ENCODE measurements at regions of chr14 and their contacts with region 1.

Region 1: GRCh38 chr14:93655078-93655750 is 133.1 kb downstream of the PRIMA1 start:
- DNase-seq: peak; percentile 25
- ATAC-seq: no peak
- H3K4me3 Mint-ChIP-seq: no peak overlapping the region
- H3K27ac Mint-ChIP-seq: no peak overlapping the region
- H3K4me1 Mint-ChIP-seq: no peaks in the 10 kb centered on the region
- H3K27me3 Mint-ChIP-seq: peaks cover 9% of the 10 kb centered on the region

Region 2: GRCh38 chr14:93906341-93907329 is 251.4 kb after region 1 on chr14:
- CTCF ChIA-PET with region 1: interaction called, 13 read pairs
- POLR2A ChIA-PET with region 1: no interaction called
- DNase-seq: peak; percentile 79
- ATAC-seq: peak; percentile 91
- H3K4me3 Mint-ChIP-seq: no peak overlapping the region
- H3K27ac Mint-ChIP-seq: peak overlapping the region; percentile 33
- H3K4me1 Mint-ChIP-seq: peaks cover 5% of the 10 kb centered on the region
- H3K27me3 Mint-ChIP-seq: peaks cover 4% of the 10 kb centered on the region

Measured in activated CD8-positive, alpha-beta T cell treated with anti-CD3 and anti-CD28 coated beads, Interleukin-2, amount 10 ng/mL, durations not matched to agents 7 days and 5 days (primary cell).